T-cell (primary cell): ENCODE measurements at regions of chr7 and their contacts with region 1.

Region 1: GRCh38 chr7:21469894-21470293 is 42.0 kb downstream of the SP4 start:
- DNase-seq: no peak
- ATAC-seq: no peak
- H3K4me3 ChIP-seq: no peak overlapping the region
- H3K4me3 Mint-ChIP-seq: no peak overlapping the region
- H3K27ac ChIP-seq: no peak overlapping the region
- H3K27ac Mint-ChIP-seq: no peak overlapping the region
- H3K4me1 ChIP-seq: no peaks in the 10 kb centered on the region
- H3K4me1 Mint-ChIP-seq: peaks cover 59 to 69% (median 59%) of the 10 kb centered on the region in 3 donors
- H3K27me3 ChIP-seq: no peaks in the 10 kb centered on the region
- H3K27me3 Mint-ChIP-seq: no peaks in the 10 kb centered on the region

Region 2: DNA sequence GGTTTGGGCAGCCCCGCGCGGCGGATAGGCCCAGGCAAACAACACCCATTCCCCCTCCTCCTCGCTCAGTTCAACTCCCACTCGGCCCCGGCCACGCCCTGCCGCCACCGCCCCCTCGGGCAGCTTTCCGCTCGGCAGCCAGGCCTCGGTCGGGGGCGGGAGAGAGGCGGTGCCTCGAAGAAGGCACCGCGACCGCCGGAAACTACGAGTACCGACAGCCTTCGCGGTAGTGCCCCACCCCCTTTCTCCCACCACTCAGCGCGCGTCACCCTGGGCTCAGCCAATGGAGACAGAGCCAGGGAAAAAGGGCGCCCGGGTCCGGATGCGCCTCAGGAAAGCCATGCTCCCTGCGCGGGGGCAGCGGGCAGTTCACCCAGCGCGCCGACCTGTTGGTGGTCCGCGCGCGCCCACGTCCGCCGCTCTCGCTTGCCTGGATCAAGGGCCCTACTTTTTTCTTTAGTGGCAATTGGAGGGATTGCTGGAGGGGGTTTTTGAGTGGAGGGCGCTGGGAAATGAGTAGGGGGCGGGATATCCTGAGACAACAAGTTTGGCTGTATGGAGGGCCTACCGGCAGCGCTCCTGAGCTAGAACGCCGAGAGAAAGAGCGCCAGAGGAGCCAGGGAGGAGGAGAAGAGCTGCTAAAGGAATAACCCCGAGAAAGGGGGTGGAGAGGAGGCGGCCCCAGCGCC is 42.6 kb before region 1 on chr7:
- CTCF ChIA-PET with region 1: interaction called in 1 of 2 experiments, 4 read pairs
- POLR2A ChIA-PET with region 1: interaction called in 1 of 2 experiments, 11 read pairs
- DNase-seq: peak; percentile 97 to 100 (median 100)
- ATAC-seq: peak; percentile 75 to 79 (median 76)
- H3K4me3 ChIP-seq: peak overlapping the region; percentile 80 to 89
- H3K4me3 Mint-ChIP-seq: peak overlapping the region; percentile 97 to 100 (median 99)
- H3K27ac ChIP-seq: peak overlapping the region; percentile 90
- H3K27ac Mint-ChIP-seq: peak overlapping the region; percentile 99
- H3K4me1 ChIP-seq: peaks cover 33 to 40% of the 10 kb centered on the region in 2 experiments
- H3K4me1 Mint-ChIP-seq: peaks cover 45 to 49% (median 49%) of the 10 kb centered on the region in 3 donors
- H3K27me3 ChIP-seq: no peaks in the 10 kb centered on the region
- H3K27me3 Mint-ChIP-seq: no peaks in the 10 kb centered on the region